Posterior cingulate gyrus (tissue), 11 donors: ENCODE measurements at regions of chr2 and their contacts with region 1.

Region 1: DNA sequence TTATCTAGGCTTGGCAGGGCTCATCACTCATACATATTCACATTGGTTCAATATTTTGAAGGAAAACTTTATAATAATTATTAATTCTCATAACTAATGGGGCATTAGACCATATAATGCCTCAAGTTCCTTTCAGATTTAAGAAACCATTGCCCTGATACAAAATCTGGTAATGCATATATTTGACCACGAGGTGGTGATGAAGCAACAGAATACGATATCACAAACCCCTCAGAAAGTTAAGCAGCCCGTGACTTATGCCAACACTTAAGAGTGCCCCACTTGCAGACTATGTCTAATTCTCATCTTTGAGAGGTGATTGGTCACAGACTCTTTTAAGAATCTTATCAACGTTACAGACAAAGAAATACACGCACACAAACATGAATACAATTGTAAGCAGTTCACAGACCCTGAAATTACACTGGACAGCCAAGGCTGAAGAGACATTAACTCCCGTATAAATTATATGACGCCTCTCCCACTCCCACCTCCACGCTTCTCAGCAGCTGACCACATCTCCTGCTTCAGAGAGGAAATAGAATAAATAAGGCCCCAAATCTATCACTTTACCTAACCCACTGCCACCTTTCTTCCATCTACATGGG is 20.7 kb upstream of the DNAH6 start:
- DNase-seq: no peak

Region 2: GRCh38 chr2:84631047-84631446 is 135.4 kb after region 1 on chr2:
- intact Hi-C with region 1: loop called (anchors 2 kb)
- DNase-seq: no peak

Region 3: GRCh38 chr2:84881581-84882414 is 386.2 kb after region 1 on chr2:
- intact Hi-C with region 1: loop called (anchors 5 kb)
- DNase-seq: peak; percentile 52 to 95 (median 77)

Region 4: GRCh38 chr2:84925724-84926376 is 430.2 kb after region 1 on chr2:
- intact Hi-C with region 1: loop called (anchors 2 kb)
- DNase-seq: peak; percentile 71 to 98 (median 94)